ENCODE measurements at regions of chr7 and their contacts with region 1.

Region 1: GRCh38 chr7:103296901-103297836 is at the start of gene PMPCB:
- DNase-seq: peak; percentile 96 to 97
- ATAC-seq: peak; percentile 97 to 99 (median 98)
- H3K4me3 ChIP-seq: peak within 1 kb of the TSS; percentile 85
- H3K27ac ChIP-seq: peak within 1 kb of the TSS; percentile 86
- H3K4me1 ChIP-seq: peaks cover 10% of the 10 kb centered on the region
- H3K27me3 ChIP-seq: no peaks in the 10 kb centered on the region
- CTCF ChIP-seq: peak; percentile 97
- total RNA-seq, gene PMPCB: 43.8 to 54.3 (median 48.2) TPM

Region 2: GRCh38 chr7:103344453-103345149 is 47.4 kb after region 1 on chr7 and contains the start of gene DNAJC2:
- intact Hi-C with region 1: loop called (anchors 2 to 5 kb)
- DNase-seq: peak; percentile 88 to 92
- ATAC-seq: peak; percentile 89 to 94 (median 92)
- H3K4me3 ChIP-seq: peak within 1 kb of the TSS; percentile 77
- H3K27ac ChIP-seq: peak within 1 kb of the TSS; percentile 86
- H3K4me1 ChIP-seq: peaks cover 30% of the 10 kb centered on the region
- H3K27me3 ChIP-seq: no peaks in the 10 kb centered on the region
- CTCF ChIP-seq: no peak
- total RNA-seq, gene DNAJC2: 19.8 to 33.3 (median 32.7) TPM

Region 3: DNA sequence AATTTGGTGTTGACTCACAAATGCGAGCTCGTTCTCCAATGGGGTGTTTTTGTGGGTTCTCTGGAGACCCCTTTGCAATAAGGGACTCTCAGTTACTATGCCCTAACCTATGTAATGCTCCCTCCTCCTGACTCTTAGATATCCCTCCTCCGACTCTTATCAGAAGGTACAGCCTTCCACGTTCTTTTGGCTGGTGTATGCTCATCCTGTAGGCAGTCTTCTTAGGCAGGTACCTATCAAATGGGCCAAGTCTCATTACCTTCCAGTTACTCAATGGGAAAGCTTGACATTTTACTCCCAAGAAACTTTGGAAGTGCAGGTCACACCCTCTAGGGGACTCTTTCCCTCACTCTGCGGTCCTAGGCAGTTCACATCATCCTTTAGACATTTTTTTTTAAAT is 116.2 kb after region 1 on chr7:
- intact Hi-C with region 1: loop called in 1 of 2 experiments (anchors 5 kb)
- DNase-seq: no peak
- ATAC-seq: no peak
- H3K4me3 ChIP-seq: no peak overlapping the region
- H3K27ac ChIP-seq: no peak overlapping the region
- H3K4me1 ChIP-seq: no peaks in the 10 kb centered on the region
- H3K27me3 ChIP-seq: no peaks in the 10 kb centered on the region
- CTCF ChIP-seq: no peak

Region 4: GRCh38 chr7:104412911-104413310 is 1115.7 kb after region 1 on chr7:
- intact Hi-C with region 1: no loop called
- DNase-seq: no peak
- ATAC-seq: no peak
- H3K4me3 ChIP-seq: no peak overlapping the region
- H3K27ac ChIP-seq: no peak overlapping the region
- H3K4me1 ChIP-seq: no peaks in the 10 kb centered on the region
- H3K27me3 ChIP-seq: no peaks in the 10 kb centered on the region
- CTCF ChIP-seq: no peak